ENCODE measurements at regions of chr9 and their contacts with region 1.

Region 1: DNA sequence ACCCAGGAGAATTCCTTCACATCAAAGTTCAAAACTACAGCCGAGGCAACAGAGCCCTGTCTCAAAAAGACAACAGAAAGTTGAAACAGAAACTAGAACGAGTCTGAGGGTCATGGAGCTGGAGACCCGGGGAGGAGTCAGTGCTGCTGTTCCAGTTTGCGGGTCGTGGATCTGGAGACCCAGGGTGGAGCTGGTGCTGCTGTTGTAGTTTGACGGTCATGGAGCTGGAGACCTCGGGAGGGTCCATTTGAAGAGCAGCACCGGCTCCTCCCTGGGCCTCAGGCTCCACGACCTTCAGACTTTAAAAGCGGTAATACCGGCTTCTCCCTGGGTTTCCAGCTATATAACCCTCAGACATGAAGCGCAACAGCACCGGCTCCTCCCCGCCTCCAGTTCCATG is 13.0 kb upstream of the LCN15 start:
- DNase-seq: no peak
- H3K4me3 Mint-ChIP-seq: no peak overlapping the region
- H3K27ac Mint-ChIP-seq: no peak overlapping the region
- H3K4me1 Mint-ChIP-seq: no peaks in the 10 kb centered on the region
- H3K27me3 Mint-ChIP-seq: peaks cover 35% of the 10 kb centered on the region

Region 2: DNA sequence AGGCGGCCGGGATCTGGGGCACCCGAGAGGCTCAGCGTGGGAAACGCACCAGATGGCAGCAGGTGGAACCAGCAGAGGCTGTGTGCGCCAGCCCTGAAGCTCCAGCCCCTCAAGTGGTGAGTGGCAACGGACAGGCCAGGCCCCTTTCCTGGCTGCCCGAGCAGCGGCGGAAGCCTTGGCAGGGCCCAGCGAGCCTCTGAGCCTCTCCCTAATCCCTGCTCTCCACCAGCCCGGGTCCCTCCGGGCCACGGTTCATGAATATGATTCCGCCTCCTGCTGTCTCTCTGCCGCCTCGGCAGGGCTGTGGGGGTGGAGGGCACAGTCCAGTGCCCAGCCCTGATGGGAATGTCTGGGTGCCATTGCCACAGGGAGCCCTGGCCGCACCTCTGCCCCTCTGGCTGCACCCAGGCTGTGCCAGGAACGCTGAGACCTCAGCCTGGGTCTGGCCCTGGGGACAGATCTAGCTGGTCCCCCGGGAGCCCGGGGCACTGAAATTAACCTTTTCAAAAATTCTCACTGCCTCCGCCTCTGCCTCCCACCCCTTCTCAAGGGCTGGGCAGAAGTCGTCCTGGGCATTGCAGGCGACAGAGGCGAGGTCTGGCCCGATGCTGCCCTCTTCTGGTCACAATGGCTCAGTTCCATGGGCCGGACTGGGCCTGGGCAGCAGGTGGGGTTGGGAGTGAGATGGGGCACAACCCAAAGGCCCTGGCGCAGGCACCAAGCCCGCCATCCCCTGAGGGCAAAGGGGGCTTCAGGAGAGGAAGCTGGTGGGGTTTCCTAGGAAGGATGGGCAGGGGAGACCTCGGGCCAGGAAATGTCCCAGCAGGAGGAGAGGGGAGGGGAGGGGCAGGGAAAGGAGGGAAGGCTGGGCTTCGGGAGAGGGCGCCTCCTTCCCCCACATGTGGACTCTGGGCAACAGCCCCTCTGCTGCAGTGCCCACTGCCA is 493.8 kb before region 1 on chr9:
- CTCF ChIA-PET with region 1: no interaction called
- POLR2A ChIA-PET with region 1: no interaction called
- DNase-seq: peak; percentile 72
- H3K4me3 Mint-ChIP-seq: no peak overlapping the region
- H3K27ac Mint-ChIP-seq: no peak overlapping the region
- H3K4me1 Mint-ChIP-seq: peaks cover 8% of the 10 kb centered on the region
- H3K27me3 Mint-ChIP-seq: no peaks in the 10 kb centered on the region

Region 3: DNA sequence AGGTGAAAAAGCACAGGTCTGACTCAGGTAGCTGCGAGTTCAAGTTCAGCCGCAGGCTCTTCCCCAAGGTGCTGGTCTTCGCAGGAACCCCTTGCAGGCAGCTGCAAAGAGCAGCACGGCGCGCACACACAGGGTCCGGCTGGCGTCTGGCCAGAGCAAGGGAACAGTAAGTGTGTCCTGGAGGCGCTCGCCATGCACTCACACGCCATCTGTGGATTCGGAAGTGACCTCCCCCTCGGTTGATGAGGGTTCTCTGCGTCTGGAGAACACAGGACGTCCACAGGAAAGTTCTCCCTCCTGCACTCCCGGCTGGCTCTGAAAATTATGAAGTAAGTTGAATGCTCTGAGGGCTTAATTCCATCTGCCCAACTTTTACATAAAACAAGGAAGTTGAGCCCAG is 128.6 kb before region 1 on chr9:
- CTCF ChIA-PET with region 1: no interaction called
- POLR2A ChIA-PET with region 1: no interaction called
- DNase-seq: no peak
- H3K4me3 Mint-ChIP-seq: no peak overlapping the region
- H3K27ac Mint-ChIP-seq: no peak overlapping the region
- H3K4me1 Mint-ChIP-seq: no peaks in the 10 kb centered on the region
- H3K27me3 Mint-ChIP-seq: peaks cover 16% of the 10 kb centered on the region

Region 4: DNA sequence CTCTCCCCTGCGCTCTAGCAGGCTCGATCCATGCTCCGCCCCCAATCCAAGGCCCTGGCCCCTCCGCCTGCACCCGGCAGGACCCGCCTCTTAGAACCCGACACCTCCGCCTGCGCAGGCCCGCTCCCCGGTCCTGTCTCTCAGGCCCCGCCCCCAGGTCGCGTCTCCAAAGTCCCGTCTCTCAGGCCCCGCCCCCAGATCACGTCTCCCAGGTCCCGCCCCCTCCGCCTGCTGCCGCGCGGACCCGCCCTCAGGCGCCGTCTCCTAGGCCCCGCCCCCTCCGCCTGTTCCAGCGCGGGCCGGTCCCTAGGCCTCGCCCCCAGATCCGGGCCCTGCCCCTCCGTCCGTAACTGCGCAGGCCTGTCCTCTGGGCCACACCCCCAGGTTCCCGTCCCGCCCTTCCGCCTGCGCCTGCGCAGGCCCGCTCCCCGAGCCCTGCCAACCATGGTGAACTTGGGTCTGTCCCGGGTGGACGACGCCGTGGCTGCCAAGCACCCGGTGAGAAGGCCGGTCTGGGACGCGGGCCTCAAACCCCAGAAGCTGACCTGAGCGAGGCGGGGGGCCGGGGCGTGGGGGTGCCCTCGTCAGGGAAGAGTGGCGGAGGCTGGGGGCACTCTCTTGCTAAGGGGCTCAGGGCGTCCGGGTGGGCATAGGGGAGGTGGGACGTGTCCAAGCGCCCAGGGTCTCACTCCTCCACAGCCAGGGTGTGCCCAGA is 13.7 kb after region 1 on chr9 and contains the start of gene TMEM141:
- CTCF ChIA-PET with region 1: interaction called, 14 read pairs
- POLR2A ChIA-PET with region 1: no interaction called
- DNase-seq: peak; percentile 99
- H3K4me3 Mint-ChIP-seq: peak within 1 kb of the TSS; percentile 79
- H3K27ac Mint-ChIP-seq: peak within 1 kb of the TSS; percentile 93
- H3K4me1 Mint-ChIP-seq: peaks cover 40% of the 10 kb centered on the region
- H3K27me3 Mint-ChIP-seq: peaks cover 10% of the 10 kb centered on the region
- total RNA-seq, gene TMEM141: 28.5 to 38.5 TPM

Region 5: DNA sequence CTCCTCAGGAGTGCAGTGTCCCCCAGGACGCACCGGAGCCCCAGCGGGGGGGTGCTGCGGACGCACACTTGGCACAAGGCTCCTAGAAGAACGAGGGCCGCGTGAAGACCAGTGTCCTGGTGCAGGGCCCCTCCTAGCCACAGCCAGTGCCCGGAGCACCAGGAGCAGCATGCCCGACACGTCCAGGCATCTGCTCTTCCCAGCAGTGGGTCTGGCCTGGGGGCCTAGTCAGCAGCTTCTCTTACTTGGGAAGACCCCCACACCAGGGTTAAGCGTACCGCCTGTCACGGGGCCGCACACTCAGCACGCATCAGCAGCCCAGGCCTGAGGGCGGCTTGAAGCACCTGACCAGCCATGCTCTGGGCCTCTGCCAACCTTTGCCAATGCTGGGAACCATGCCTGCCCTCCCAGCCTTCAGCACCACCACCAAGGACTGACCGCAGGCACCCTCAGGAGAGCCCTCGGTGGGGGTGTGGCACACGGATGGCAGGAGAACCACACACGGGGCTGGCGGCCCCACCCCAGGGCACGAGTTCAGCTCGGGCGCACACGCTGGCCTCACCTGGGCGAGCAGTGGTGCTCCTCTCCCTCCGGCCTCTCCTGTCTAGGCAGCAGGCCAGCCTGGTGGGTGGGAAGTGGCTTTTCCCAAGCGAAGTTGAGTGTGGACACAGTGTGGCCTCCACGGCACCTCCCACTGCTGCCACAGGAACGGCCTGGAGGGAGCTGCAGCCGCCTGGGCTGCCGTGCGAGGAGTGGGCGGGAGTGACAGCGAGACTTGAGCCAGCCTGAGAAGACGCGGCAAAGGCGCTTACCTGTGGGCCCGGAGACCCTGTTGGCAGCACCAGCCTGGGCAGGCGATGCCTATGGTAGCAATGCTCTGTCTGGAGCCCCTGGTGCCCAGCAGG is 52.9 kb after region 1 on chr9:
- CTCF ChIA-PET with region 1: no interaction called
- POLR2A ChIA-PET with region 1: no interaction called
- DNase-seq: no peak
- H3K4me3 Mint-ChIP-seq: no peak overlapping the region
- H3K27ac Mint-ChIP-seq: no peak overlapping the region
- H3K4me1 Mint-ChIP-seq: no peaks in the 10 kb centered on the region
- H3K27me3 Mint-ChIP-seq: no peaks in the 10 kb centered on the region

Region 6: GRCh38 chr9:137286975-137287383 is 509.6 kb after region 1 on chr9:
- CTCF ChIA-PET with region 1: no interaction called
- POLR2A ChIA-PET with region 1: no interaction called
- DNase-seq: peak; percentile 37
- H3K4me3 Mint-ChIP-seq: no peak overlapping the region
- H3K27ac Mint-ChIP-seq: no peak overlapping the region
- H3K4me1 Mint-ChIP-seq: peaks cover 3% of the 10 kb centered on the region
- H3K27me3 Mint-ChIP-seq: peaks cover 10% of the 10 kb centered on the region